Calu3 (cell line): ENCODE measurements at regions of chr16 and their contacts with region 1.

Region 1: DNA sequence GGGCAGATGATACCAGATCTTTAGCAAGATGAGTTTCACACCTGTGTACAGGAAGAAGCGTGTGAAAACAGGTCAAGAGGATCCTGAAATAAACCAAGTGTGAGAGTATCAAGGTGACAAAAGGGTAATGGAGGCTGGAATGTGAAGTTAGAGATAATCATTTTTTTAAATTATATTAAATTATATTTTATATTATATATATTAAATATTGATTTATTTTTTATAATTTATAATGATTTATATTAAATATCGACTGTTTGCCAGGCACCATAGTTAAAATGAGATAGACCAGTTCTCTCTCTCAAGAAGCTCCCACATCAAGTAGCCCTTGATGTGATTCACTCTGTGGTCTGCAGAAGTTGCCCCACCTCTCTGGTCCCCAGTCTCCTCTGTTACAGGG is 360.2 kb upstream of the HSBP1 start:
- DNase-seq: no peak
- H3K4me3 Mint-ChIP-seq: no peak overlapping the region
- H3K27ac Mint-ChIP-seq: no peak overlapping the region
- H3K4me1 Mint-ChIP-seq: no peaks in the 10 kb centered on the region
- H3K27me3 Mint-ChIP-seq: no peaks in the 10 kb centered on the region
- CTCF ChIP-seq: no peak

Region 2: GRCh38 chr16:83878838-83879237 is 431.3 kb after region 1 on chr16:
- CTCF ChIA-PET with region 1: no interaction called
- intact Hi-C with region 1: loop called (anchors 2 kb)
- DNase-seq: peak; percentile 39
- H3K4me3 Mint-ChIP-seq: no peak overlapping the region
- H3K27ac Mint-ChIP-seq: no peak overlapping the region
- H3K4me1 Mint-ChIP-seq: peaks cover 8% of the 10 kb centered on the region
- H3K27me3 Mint-ChIP-seq: peaks cover 69% of the 10 kb centered on the region
- CTCF ChIP-seq: peak; percentile 49

Region 3: GRCh38 chr16:83939266-83939855 is 491.8 kb after region 1 on chr16:
- CTCF ChIA-PET with region 1: no interaction called
- intact Hi-C with region 1: no loop called
- DNase-seq: no peak
- H3K4me3 Mint-ChIP-seq: no peak overlapping the region
- H3K27ac Mint-ChIP-seq: no peak overlapping the region
- H3K4me1 Mint-ChIP-seq: peaks cover 19% of the 10 kb centered on the region
- H3K27me3 Mint-ChIP-seq: peaks cover 31% of the 10 kb centered on the region
- CTCF ChIP-seq: no peak